Activated CD4-positive, alpha-beta T cell treated with anti-CD3 and anti-CD28 coated beads for 36 hours (primary cell): ENCODE measurements at regions of chr20 and their contacts with region 1.

Region 1: DNA sequence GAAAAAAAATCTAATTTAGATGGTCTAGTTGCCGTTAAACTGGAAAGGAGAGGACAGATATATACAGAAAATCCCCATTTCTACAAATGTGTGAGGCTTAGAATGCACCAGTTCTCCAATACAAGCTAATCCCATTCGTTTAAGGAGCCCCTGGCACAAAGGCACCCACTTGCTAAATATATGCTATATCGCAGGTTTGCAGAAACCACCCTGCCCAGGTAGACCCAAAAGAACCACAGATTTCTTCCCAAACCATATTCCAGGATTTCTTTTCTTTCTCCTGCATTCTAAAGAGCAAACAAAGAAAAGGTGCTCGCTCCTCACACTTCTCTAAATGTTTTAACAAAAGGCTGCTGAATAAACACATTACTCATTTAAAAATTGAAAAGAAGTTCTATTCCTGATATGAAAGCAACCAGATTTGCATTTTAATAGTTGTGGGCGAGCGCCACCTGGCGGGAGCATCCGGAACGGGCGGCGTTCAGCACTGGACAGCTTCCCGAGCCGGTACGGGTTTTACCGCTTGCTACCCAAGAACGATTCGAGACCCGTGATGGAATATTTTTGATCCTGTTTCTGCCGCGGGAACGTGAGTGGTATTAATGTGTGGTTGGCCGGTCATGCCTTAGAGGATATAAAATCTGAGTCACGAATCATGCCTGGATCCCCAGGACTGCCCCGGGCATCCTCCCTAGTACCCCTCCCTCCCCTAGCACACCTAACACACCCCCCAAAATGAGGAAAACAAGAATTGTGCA is 2.1 kb downstream of the PTPRT start:
- DNase-seq: peak; percentile 83
- ATAC-seq: peak; percentile 42
- H3K4me3 Mint-ChIP-seq: no peak overlapping the region
- H3K27ac Mint-ChIP-seq: no peak overlapping the region
- H3K4me1 Mint-ChIP-seq: peaks cover 4% of the 10 kb centered on the region
- H3K27me3 Mint-ChIP-seq: peaks cover 43% of the 10 kb centered on the region

Region 2: GRCh38 chr20:43210901-43211300 is 23.2 kb after region 1 on chr20:
- CTCF ChIA-PET with region 1: no interaction called
- POLR2A ChIA-PET with region 1: no interaction called
- intact Hi-C with region 1: no loop called
- DNase-seq: no peak
- ATAC-seq: no peak
- H3K4me3 Mint-ChIP-seq: no peak overlapping the region
- H3K27ac Mint-ChIP-seq: no peak overlapping the region
- H3K4me1 Mint-ChIP-seq: no peaks in the 10 kb centered on the region
- H3K27me3 Mint-ChIP-seq: peaks cover 9% of the 10 kb centered on the region

Region 3: GRCh38 chr20:43255861-43256260 is 68.2 kb after region 1 on chr20:
- CTCF ChIA-PET with region 1: no interaction called
- POLR2A ChIA-PET with region 1: no interaction called
- intact Hi-C with region 1: no loop called
- DNase-seq: no peak
- ATAC-seq: no peak
- H3K4me3 Mint-ChIP-seq: no peak overlapping the region
- H3K27ac Mint-ChIP-seq: no peak overlapping the region
- H3K4me1 Mint-ChIP-seq: no peaks in the 10 kb centered on the region
- H3K27me3 Mint-ChIP-seq: peaks cover 4% of the 10 kb centered on the region

Region 4: GRCh38 chr20:43408848-43409576 is 221.4 kb after region 1 on chr20:
- CTCF ChIA-PET with region 1: interaction called, 4 read pairs
- POLR2A ChIA-PET with region 1: no interaction called
- intact Hi-C with region 1: loop called (anchors 5 kb)
- DNase-seq: peak; percentile 25
- ATAC-seq: no peak
- H3K4me3 Mint-ChIP-seq: no peak overlapping the region
- H3K27ac Mint-ChIP-seq: no peak overlapping the region
- H3K4me1 Mint-ChIP-seq: no peaks in the 10 kb centered on the region
- H3K27me3 Mint-ChIP-seq: peaks cover 42% of the 10 kb centered on the region

Region 5: GRCh38 chr20:43761386-43762340 is 574.0 kb after region 1 on chr20:
- CTCF ChIA-PET with region 1: no interaction called
- POLR2A ChIA-PET with region 1: no interaction called
- intact Hi-C with region 1: no loop called
- DNase-seq: no peak
- ATAC-seq: no peak
- H3K4me3 Mint-ChIP-seq: no peak overlapping the region
- H3K27ac Mint-ChIP-seq: no peak overlapping the region
- H3K4me1 Mint-ChIP-seq: peaks cover 4% of the 10 kb centered on the region
- H3K27me3 Mint-ChIP-seq: no peaks in the 10 kb centered on the region